Activated naive CD4-positive, alpha-beta T cell treated with anti-CD3 and anti-CD28 coated beads for 36 hours (primary cell): ENCODE measurements at regions of chr1 and their contacts with region 1.

Region 1: GRCh38 chr1:209565759-209566678 is 17.5 kb upstream of the CAMK1G start:
- DNase-seq: peak; percentile 92
- H3K4me3 Mint-ChIP-seq: no peak overlapping the region
- H3K27ac Mint-ChIP-seq: no peak overlapping the region
- H3K4me1 Mint-ChIP-seq: peaks cover 20% of the 10 kb centered on the region
- H3K27me3 Mint-ChIP-seq: peaks cover 13% of the 10 kb centered on the region

Region 2: GRCh38 chr1:208652296-208653160 is 913.5 kb before region 1 on chr1:
- CTCF ChIA-PET with region 1: interaction called, 4 read pairs
- intact Hi-C with region 1: loop called (anchors 1 kb)
- DNase-seq: peak; percentile 41
- H3K4me3 Mint-ChIP-seq: no peak overlapping the region
- H3K27ac Mint-ChIP-seq: no peak overlapping the region
- H3K4me1 Mint-ChIP-seq: no peaks in the 10 kb centered on the region
- H3K27me3 Mint-ChIP-seq: peaks cover 14% of the 10 kb centered on the region

Region 3: GRCh38 chr1:209248649-209249279 is 317.3 kb before region 1 on chr1:
- CTCF ChIA-PET with region 1: interaction called, 16 read pairs
- intact Hi-C with region 1: loop called (anchors 1 kb)
- DNase-seq: peak; percentile 74
- H3K4me3 Mint-ChIP-seq: no peak overlapping the region
- H3K27ac Mint-ChIP-seq: no peak overlapping the region
- H3K4me1 Mint-ChIP-seq: no peaks in the 10 kb centered on the region
- H3K27me3 Mint-ChIP-seq: peaks cover 1% of the 10 kb centered on the region

Region 4: DNA sequence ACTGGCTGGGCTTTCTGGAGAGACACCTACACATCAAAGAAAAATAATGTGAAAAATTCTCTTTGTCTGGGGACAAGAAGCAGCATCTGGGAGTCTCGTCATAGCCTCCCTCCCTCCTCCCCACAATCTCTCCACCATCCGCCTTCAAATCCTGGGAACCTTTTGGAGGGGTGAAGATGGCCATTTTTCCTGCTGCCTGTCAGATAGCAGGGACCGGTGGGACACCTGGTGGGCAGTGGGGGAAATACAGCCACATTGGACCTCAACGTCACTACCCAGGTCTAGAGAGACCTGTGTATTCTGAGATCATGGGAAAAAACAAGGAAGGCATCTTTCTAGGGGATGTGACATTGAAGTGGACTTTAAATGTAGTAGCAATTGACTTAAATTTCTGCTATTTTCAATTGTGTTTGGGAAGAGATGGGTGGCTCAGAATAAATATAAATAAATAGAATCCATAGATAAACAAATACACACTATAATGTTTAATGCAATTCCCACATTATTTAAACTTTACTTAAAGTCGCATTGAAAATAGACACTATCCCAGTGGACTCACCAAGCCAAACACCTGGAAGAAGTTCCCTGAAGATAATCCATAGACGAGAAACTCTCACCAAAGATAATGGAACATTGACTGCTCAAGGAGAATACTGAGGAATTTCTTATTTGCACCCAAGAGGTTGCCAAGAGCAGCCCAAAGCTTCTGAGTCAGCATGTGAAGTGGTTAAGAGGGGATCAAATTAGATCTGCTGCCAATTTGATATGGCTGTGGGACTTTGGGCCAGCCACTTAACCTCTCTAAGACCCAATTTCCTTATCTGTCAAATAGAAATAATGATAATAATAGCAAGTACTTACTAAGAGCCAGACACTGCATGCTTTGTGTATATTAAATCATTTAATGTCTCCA is 130.1 kb before region 1 on chr1:
- CTCF ChIA-PET with region 1: interaction called, 3 read pairs
- intact Hi-C with region 1: loop called (anchors 1 kb)
- DNase-seq: peak; percentile 71
- H3K4me3 Mint-ChIP-seq: no peak overlapping the region
- H3K27ac Mint-ChIP-seq: no peak overlapping the region
- H3K4me1 Mint-ChIP-seq: no peaks in the 10 kb centered on the region
- H3K27me3 Mint-ChIP-seq: peaks cover 15% of the 10 kb centered on the region

Region 5: GRCh38 chr1:209590405-209590804 is 24.4 kb after region 1 on chr1:
- CTCF ChIA-PET with region 1: interaction called, 13 read pairs
- intact Hi-C with region 1: no loop called
- DNase-seq: no peak
- H3K4me3 Mint-ChIP-seq: no peak overlapping the region
- H3K27ac Mint-ChIP-seq: no peak overlapping the region
- H3K4me1 Mint-ChIP-seq: no peaks in the 10 kb centered on the region
- H3K27me3 Mint-ChIP-seq: peaks cover 12% of the 10 kb centered on the region

Region 6: DNA sequence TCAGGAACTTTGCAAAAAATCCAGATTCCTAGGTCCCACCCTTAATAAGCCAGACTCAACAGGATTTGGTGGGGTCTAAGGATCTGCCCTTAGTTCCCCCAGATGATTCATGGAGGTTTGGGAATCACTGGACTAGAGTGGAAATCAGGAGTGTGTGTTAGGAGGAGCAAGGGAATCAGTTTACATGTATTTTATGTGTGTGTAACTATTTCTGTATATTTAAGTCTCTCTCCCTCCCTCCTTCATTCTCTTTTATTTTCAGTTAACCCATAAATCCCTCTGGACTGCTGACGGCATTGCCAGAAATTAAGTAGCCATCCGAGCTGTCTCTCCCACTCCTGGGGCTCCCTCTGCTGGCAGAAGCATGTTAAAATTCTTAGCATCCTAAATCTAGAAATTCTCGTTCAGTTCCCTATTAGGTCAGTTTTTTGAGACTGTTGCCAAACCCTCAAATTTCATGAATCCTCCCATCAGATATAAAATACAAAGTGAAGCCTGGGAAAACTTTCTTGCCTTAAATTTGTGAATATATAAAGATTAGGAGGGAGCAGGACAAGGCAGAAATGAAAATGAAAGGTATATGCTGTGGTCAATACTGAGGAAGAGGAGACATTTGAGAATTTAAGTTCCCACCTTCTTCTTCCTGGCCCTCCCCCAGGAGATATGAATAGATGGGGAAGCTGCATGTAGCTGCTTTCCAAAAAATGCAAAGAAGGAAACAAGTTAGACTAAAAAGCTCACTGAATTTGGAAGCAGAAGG is 126.9 kb after region 1 on chr1:
- CTCF ChIA-PET with region 1: interaction called, 9 read pairs
- intact Hi-C with region 1: loop called (anchors 1 kb)
- DNase-seq: peak; percentile 91
- H3K4me3 Mint-ChIP-seq: no peak overlapping the region
- H3K27ac Mint-ChIP-seq: peak overlapping the region; percentile 59
- H3K4me1 Mint-ChIP-seq: peaks cover 68% of the 10 kb centered on the region
- H3K27me3 Mint-ChIP-seq: no peaks in the 10 kb centered on the region

Region 7: GRCh38 chr1:210311726-210312493 is 745.9 kb after region 1 on chr1:
- CTCF ChIA-PET with region 1: no interaction called
- intact Hi-C with region 1: loop called (anchors 5 kb)
- DNase-seq: no peak
- H3K4me3 Mint-ChIP-seq: peak overlapping the region; percentile 79
- H3K27ac Mint-ChIP-seq: no peak overlapping the region
- H3K4me1 Mint-ChIP-seq: peaks cover 4% of the 10 kb centered on the region
- H3K27me3 Mint-ChIP-seq: peaks cover 20% of the 10 kb centered on the region